Activated T-helper 2 cell treated with anti-CD3 and anti-CD28 coated beads, Interferon-gamma antibody, Interleukin-2, Interleukin-4, amounts not matched to agents 10 μg/mL and 5 μg/mL and 100 μg/mL, durations not matched to agents 14 hours and 24 hours and 36 hours (primary cell): ENCODE measurements at regions of chr1 and their contacts with region 1.

Region 1: DNA sequence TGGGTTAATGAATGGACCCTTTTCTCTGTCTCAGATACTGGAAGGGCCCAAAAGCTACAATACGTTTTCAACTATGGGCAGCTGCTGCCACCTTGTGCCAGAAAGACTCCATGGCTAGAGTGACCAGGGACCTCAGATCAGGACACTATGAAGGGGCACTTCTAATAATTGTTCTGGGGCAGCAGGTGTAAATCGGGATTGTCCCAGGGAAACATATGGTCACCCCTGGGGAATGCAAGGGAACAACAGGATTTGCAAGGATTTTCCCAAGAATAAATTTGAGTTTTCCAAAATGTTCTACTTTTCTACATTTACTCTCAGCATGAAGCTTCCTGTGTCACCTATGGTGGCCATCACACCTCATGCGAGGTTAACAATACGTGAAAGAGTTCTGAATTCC is 12.0 kb upstream of the FCAMR start:
- DNase-seq: peak; percentile 20
- H3K4me3 Mint-ChIP-seq: no peak overlapping the region
- H3K27ac Mint-ChIP-seq: no peak overlapping the region
- H3K4me1 Mint-ChIP-seq: no peaks in the 10 kb centered on the region
- H3K27me3 Mint-ChIP-seq: peaks cover 54% of the 10 kb centered on the region

Region 2: DNA sequence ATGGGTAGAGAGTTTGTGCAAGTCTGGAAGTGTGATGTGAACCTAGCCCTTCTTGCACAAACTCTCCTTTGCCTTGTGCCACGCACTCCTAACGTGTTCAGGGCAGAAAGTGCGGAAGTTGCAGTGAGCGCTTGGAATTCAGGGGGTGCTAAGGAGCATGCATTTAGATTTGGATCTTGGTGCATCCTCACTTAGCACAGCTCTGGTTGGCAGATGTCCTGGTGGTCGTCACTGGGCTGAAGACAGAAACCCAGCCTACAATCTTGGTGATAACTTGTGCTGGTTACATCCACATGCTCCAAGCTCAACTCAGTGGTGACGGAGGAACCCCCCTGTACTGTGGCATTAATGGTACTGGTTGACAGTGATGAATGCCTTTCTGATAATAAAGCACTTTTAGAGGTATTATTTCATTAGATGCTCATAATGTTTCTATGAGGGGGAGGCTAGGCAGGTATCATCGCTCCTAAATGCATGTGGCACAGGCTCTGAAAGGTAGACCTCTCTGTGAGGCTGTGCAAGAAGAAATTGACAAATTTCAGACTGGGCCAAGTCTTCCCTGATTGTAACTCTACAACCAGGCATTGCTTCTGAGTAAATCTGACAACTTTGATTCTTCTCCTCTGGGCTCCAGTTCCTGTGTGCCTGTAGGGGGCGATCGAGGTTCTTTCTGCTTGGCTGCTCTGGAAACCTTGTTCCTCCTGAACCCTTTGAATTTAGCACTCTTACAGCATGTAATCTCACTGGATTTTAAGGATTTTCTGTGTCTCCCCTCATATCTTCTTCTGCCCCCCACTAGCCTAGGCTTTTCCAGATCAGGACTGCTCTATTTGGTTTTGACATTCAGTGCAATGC is 256.9 kb before region 1 on chr1:
- intact Hi-C with region 1: loop called (anchors 5 kb)
- DNase-seq: peak; percentile 45
- H3K4me3 Mint-ChIP-seq: no peak overlapping the region
- H3K27ac Mint-ChIP-seq: no peak overlapping the region
- H3K4me1 Mint-ChIP-seq: peaks cover 52% of the 10 kb centered on the region
- H3K27me3 Mint-ChIP-seq: no peaks in the 10 kb centered on the region

Region 3: GRCh38 chr1:206865013-206865671 is 117.1 kb before region 1 on chr1 and contains the start of gene IL20:
- intact Hi-C with region 1: loop called (anchors 5 kb)
- DNase-seq: peak; percentile 71
- H3K4me3 Mint-ChIP-seq: no peak within 1 kb of the TSS
- H3K27ac Mint-ChIP-seq: no peak within 1 kb of the TSS
- H3K4me1 Mint-ChIP-seq: peaks cover 8% of the 10 kb centered on the region
- H3K27me3 Mint-ChIP-seq: peaks cover 43% of the 10 kb centered on the region
- total RNA-seq, gene IL20: not detected in 2 replicates

Region 4: GRCh38 chr1:206935491-206936067 is 46.6 kb before region 1 on chr1:
- intact Hi-C with region 1: loop called (anchors 2 kb)
- DNase-seq: peak; percentile 29
- H3K4me3 Mint-ChIP-seq: no peak overlapping the region
- H3K27ac Mint-ChIP-seq: no peak overlapping the region
- H3K4me1 Mint-ChIP-seq: peaks cover 11% of the 10 kb centered on the region
- H3K27me3 Mint-ChIP-seq: peaks cover 2% of the 10 kb centered on the region

Region 5: DNA sequence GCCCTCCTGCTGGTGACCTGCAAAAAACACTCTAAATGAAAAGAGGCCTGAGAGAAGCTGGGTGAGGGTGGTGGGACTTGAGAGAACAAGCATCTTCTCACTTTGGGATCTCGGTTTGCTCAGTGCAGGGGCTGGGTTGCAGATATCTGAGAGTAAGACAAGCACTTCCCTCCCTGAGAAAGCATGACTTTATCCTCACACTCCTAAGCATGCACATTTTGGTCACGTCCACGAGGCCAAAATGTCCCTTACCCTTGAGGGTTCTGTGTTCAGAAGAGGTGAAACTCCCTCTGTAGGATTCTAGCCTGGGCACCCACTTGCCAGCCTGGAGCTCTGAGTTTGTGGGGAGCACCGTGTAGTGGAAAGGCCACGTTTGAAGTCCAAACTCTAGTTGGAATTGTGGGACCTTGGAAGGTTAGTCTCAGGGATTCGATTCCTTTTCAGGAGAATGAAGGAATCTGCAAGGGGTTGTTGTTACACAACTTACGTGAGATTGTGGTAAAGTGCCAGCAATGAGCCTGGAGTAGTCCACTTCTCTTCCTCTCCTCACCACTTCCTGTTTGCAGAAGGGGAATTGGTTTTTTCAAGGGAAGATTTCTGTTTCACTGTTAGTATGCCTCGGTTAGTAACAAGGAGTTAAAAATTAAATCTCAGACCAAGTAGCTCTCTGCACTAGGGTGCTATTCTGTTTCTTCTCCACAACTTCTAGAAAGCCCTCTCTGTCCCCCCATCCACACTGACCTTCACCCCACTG is 14.9 kb before region 1 on chr1:
- intact Hi-C with region 1: no loop called
- DNase-seq: no peak
- H3K4me3 Mint-ChIP-seq: no peak overlapping the region
- H3K27ac Mint-ChIP-seq: peak overlapping the region; percentile 2
- H3K4me1 Mint-ChIP-seq: peaks cover 32% of the 10 kb centered on the region
- H3K27me3 Mint-ChIP-seq: peaks cover 27% of the 10 kb centered on the region